ENCODE measurements at regions of chr20 and their contacts with region 1.

Region 1: DNA sequence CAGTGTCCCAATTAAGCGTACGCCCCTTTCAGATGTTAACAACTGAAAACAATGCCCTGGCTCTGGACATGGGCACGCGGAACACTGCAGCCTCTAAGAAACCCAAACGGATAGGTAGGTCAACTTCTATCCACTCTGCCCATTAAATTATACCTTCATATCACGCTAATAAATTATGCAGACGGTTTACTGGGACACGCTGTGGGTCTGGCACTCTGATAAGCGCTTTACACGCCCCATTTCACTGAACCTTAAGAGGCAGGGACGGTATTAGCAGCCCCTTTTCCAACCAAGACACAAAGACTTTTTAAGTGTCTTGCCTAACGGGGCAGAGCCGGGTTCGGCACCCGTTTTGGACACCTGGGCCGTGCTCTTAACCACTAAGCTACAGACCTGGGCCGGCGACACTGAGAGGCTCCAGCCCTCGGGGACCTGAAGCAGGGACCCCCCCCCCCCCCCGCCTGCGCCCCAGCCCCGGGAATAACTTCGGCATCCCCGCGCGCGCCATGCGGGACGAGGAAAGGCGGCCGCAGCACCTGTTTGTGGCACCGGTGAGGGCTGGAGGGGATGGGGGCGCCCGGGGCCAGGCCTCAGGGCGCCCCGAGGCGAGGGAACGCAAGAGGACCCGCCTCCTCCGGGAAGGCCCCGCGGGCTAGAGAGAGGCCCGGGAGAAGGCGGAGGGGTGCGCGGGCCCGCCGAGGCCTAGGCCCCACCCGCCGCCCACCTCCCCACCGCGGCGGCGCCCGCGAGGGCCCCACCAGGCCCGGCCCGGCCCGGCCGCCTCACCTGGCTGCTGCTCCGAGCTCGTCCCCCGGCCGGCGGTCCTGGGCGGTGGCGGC is 585 bp downstream of the STAU1 start:
- DNase-seq: peak in 1 of 2 donors; percentile 28
- ATAC-seq: peak; percentile 41 to 42
- H3K4me3 ChIP-seq: peak overlapping the region; percentile 74 to 83 (median 82)
- H3K27ac ChIP-seq: peak overlapping the region; percentile 84 to 98 (median 92)
- H3K4me1 ChIP-seq: peaks cover 16 to 30% of the 10 kb centered on the region in 2 donors
- H3K27me3 ChIP-seq: no peaks in the 10 kb centered on the region
- CTCF ChIP-seq: no peak
- POLR2A ChIP-seq: no peak

Region 2: GRCh38 chr20:49006446-49006980 is 181.0 kb before region 1 on chr20:
- in situ Hi-C with region 1: no loop called
- intact Hi-C with region 1: no loop called
- DNase-seq: no peak
- ATAC-seq: no peak
- H3K4me3 ChIP-seq: no peak overlapping the region
- H3K27ac ChIP-seq: no peak overlapping the region
- H3K4me1 ChIP-seq: no peaks in the 10 kb centered on the region
- H3K27me3 ChIP-seq: no peaks in the 10 kb centered on the region
- CTCF ChIP-seq: no peak
- POLR2A ChIP-seq: no peak

Region 3: GRCh38 chr20:49245921-49246740 is 58.6 kb after region 1 on chr20:
- in situ Hi-C with region 1: no loop called
- intact Hi-C with region 1: no loop called
- DNase-seq: no peak
- ATAC-seq: peak; percentile 47 to 55
- H3K4me3 ChIP-seq: no peak overlapping the region
- H3K27ac ChIP-seq: no peak overlapping the region
- H3K4me1 ChIP-seq: no peaks in the 10 kb centered on the region
- H3K27me3 ChIP-seq: no peaks in the 10 kb centered on the region
- CTCF ChIP-seq: peak; percentile 13 to 53 (median 34)
- POLR2A ChIP-seq: no peak

Region 4: DNA sequence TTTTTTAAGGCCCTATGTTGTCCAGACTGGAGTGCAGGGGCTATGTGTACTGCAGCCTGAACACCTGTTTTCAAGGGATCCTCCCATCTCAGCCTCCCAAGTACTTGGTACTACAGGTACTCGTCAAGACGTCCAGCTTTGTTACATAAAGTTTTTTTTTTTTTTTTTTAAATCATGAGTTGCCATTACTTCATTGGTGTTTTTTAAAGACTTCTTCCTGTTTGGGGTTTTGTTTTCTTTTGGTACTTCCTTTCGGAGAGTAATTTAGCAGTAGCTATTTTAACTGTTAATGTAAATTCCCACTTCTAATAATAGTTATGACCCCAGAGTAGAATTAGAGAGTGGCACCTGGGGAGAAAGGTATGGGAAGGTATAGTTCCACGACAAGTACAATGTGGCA is 79.8 kb after region 1 on chr20:
- in situ Hi-C with region 1: no loop called
- intact Hi-C with region 1: no loop called
- DNase-seq: no peak
- ATAC-seq: no peak
- H3K4me3 ChIP-seq: no peak overlapping the region
- H3K27ac ChIP-seq: peak overlapping the region in 1 of 4 donors; percentile 40
- H3K4me1 ChIP-seq: peaks cover 22 to 32% of the 10 kb centered on the region in 2 donors
- H3K27me3 ChIP-seq: no peaks in the 10 kb centered on the region
- CTCF ChIP-seq: no peak
- POLR2A ChIP-seq: no peak

Region 5: GRCh38 chr20:49278036-49278817 is 90.7 kb after region 1 on chr20 and contains the start of gene ZNFX1:
- in situ Hi-C with region 1: no loop called
- intact Hi-C with region 1: loop called (anchors 1 kb)
- DNase-seq: peak; percentile 99
- ATAC-seq: peak; percentile 92
- H3K4me3 ChIP-seq: peak within 1 kb of the TSS; percentile 62 to 88 (median 78)
- H3K27ac ChIP-seq: peak within 1 kb of the TSS; percentile 95 to 99 (median 98)
- H3K4me1 ChIP-seq: peaks cover 44 to 56% of the 10 kb centered on the region in 2 donors
- H3K27me3 ChIP-seq: no peaks in the 10 kb centered on the region
- CTCF ChIP-seq: peak in 1 of 5 experiments; percentile 21
- POLR2A ChIP-seq: peak; percentile 96 to 98
- total RNA-seq, gene ZNFX1: 28.7 to 34.9 (median 31.1) TPM